ENCODE measurements at regions of chr12 and their contacts with region 1.

Region 1: DNA sequence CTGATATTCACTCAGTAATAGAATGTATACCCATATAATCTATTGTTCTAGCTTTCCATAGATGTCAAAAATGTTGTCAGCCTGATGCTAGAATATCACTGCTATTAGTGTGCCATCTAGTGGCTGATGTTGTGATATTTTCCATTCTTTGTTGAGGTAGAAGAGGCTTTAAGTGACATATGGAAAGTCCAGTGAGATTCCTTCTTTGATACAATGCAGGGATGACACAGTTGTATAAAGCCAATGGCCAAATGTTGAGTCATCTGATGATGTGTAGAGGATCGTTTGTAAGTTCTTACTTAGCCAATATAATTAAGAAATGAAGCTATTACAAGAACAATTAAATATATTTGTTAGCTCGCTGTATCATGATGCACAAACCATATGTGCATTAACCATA is 58.1 kb upstream of the PCED1B start:
- DNase-seq: peak in 1 of 2 donors; percentile 74
- ATAC-seq: peak; percentile 52 to 71 (median 67)
- H3K4me3 ChIP-seq: no peak overlapping the region
- H3K4me3 Mint-ChIP-seq: no peak overlapping the region
- H3K27ac ChIP-seq: no peak overlapping the region
- H3K27ac Mint-ChIP-seq: no peak overlapping the region
- H3K4me1 ChIP-seq: no peaks in the 10 kb centered on the region
- H3K4me1 Mint-ChIP-seq: no peaks in the 10 kb centered on the region
- H3K27me3 ChIP-seq: no peaks in the 10 kb centered on the region
- H3K27me3 Mint-ChIP-seq: peaks cover 34 to 50% of the 10 kb centered on the region in 2 donors
- CTCF ChIP-seq: peak; percentile 87

Region 2: GRCh38 chr12:46071769-46072624 is 949.3 kb before region 1 on chr12:
- intact Hi-C with region 1: loop called (anchors 5 kb)
- DNase-seq: peak; percentile 25 to 78
- ATAC-seq: peak; percentile 82 to 96 (median 92)
- H3K4me3 ChIP-seq: no peak overlapping the region
- H3K4me3 Mint-ChIP-seq: no peak overlapping the region
- H3K27ac ChIP-seq: no peak overlapping the region
- H3K27ac Mint-ChIP-seq: no peak overlapping the region
- H3K4me1 ChIP-seq: no peaks in the 10 kb centered on the region
- H3K4me1 Mint-ChIP-seq: peaks cover 8% of the 10 kb centered on the region in 2 donors
- H3K27me3 ChIP-seq: no peaks in the 10 kb centered on the region
- H3K27me3 Mint-ChIP-seq: peaks cover 19 to 31% of the 10 kb centered on the region in 2 donors
- CTCF ChIP-seq: peak; percentile 80

Region 3: GRCh38 chr12:46944088-46944487 is 77.2 kb before region 1 on chr12:
- intact Hi-C with region 1: no loop called
- DNase-seq: no peak
- ATAC-seq: no peak
- H3K4me3 ChIP-seq: no peak overlapping the region
- H3K4me3 Mint-ChIP-seq: no peak overlapping the region
- H3K27ac ChIP-seq: no peak overlapping the region
- H3K27ac Mint-ChIP-seq: no peak overlapping the region
- H3K4me1 ChIP-seq: no peaks in the 10 kb centered on the region
- H3K4me1 Mint-ChIP-seq: no peaks in the 10 kb centered on the region
- H3K27me3 ChIP-seq: no peaks in the 10 kb centered on the region
- H3K27me3 Mint-ChIP-seq: peaks cover 0 to 8% of the 10 kb centered on the region in 2 donors
- CTCF ChIP-seq: no peak

Measured in natural killer cell (primary cell).